T-cell (primary cell): ENCODE measurements at regions of chr6 and their contacts with region 1.

Region 1: GRCh38 chr6:138907167-138907566 is 80.9 kb downstream of the REPS1 start:
- DNase-seq: no peak
- ATAC-seq: no peak
- H3K4me3 ChIP-seq: no peak overlapping the region
- H3K4me3 Mint-ChIP-seq: no peak overlapping the region
- H3K27ac ChIP-seq: no peak overlapping the region
- H3K27ac Mint-ChIP-seq: peak overlapping the region in 1 of 2 donors; percentile 29
- H3K4me1 ChIP-seq: no peaks in the 10 kb centered on the region
- H3K4me1 Mint-ChIP-seq: no peaks in the 10 kb centered on the region
- H3K27me3 ChIP-seq: no peaks in the 10 kb centered on the region
- H3K27me3 Mint-ChIP-seq: no peaks in the 10 kb centered on the region

Region 2: GRCh38 chr6:139066080-139066479 is 158.9 kb after region 1 on chr6:
- CTCF ChIA-PET with region 1: interaction called in 1 of 2 experiments, 10 read pairs
- POLR2A ChIA-PET with region 1: no interaction called
- DNase-seq: no peak
- ATAC-seq: no peak
- H3K4me3 ChIP-seq: no peak overlapping the region
- H3K4me3 Mint-ChIP-seq: no peak overlapping the region
- H3K27ac ChIP-seq: no peak overlapping the region
- H3K27ac Mint-ChIP-seq: no peak overlapping the region
- H3K4me1 ChIP-seq: no peaks in the 10 kb centered on the region
- H3K4me1 Mint-ChIP-seq: peaks cover 0 to 6% (median 0%) of the 10 kb centered on the region in 3 donors
- H3K27me3 ChIP-seq: no peaks in the 10 kb centered on the region
- H3K27me3 Mint-ChIP-seq: no peaks in the 10 kb centered on the region